Activated naive CD4-positive, alpha-beta T cell treated with anti-CD3 and anti-CD28 coated beads for 36 hours (primary cell): ENCODE measurements at regions of chr11 and their contacts with region 1.

Region 1: DNA sequence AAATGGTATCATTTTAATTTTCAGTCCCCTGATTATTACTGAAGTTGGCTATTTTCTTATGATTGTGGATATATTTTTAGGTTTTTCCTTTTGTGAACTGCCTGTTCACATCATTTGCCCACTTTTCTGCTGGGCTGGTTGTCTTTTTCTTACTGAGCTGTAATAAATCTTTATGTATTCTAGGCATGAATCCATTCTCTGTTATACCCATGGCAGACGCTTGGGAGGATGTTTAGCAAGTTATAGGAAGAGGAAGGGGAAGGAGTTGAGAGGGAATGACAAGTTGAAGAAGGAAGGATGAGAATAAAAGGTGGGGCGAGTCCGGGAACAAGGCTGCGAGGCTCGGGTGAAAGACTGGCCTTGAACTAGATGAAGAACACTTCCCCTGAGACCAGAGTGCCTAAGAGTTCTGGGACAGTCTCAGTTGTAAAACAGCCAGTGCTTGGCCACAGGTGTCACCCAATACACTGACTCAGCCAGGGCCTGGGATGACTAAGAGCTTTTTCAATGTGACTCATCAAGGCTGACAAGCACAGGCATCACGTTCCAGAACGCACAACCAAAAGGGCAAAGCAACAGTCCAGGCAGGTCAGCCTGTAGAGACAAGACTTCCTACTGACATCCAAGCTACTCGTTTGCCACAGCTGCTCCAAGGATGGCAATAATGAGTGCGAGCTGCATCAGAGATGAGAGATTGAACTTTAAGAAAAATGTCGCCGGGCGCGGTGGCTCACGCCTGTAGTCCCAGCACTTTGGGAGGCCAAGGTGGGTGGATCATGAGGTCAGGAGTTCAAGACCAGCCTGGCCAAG is 35.2 kb downstream of the LRFN4 start:
- DNase-seq: peak; percentile 80
- H3K4me3 Mint-ChIP-seq: no peak overlapping the region
- H3K27ac Mint-ChIP-seq: no peak overlapping the region
- H3K4me1 Mint-ChIP-seq: peaks cover 8% of the 10 kb centered on the region
- H3K27me3 Mint-ChIP-seq: no peaks in the 10 kb centered on the region

Region 2: GRCh38 chr11:66625041-66625751 is 266.9 kb before region 1 on chr11:
- CTCF ChIA-PET with region 1: no interaction called
- intact Hi-C with region 1: no loop called
- DNase-seq: no peak
- H3K4me3 Mint-ChIP-seq: no peak overlapping the region
- H3K27ac Mint-ChIP-seq: no peak overlapping the region
- H3K4me1 Mint-ChIP-seq: peaks cover 62% of the 10 kb centered on the region
- H3K27me3 Mint-ChIP-seq: no peaks in the 10 kb centered on the region

Region 3: DNA sequence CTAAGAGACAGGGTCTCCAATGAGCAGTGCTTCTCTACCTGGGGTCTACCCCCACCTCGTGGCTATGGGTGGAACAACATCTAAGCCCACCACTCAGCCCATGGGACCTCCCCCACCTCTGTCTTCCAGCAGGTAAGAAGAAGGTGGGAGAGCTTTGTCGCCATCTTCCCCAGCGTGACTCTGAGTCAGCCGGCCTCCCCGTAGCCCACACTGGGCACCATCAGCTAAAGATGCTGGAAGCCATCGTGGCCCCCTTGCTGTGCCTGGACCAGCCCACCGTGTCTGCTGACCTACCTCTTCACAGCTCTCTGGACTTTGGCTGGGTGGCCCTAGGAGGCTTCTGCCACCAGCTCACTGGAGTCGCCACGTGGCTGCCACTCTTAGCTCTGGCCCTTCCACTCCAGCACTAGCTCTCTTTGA is 84.0 kb after region 1 on chr11:
- CTCF ChIA-PET with region 1: no interaction called
- intact Hi-C with region 1: loop called (anchors 5 kb)
- DNase-seq: peak; percentile 30
- H3K4me3 Mint-ChIP-seq: no peak overlapping the region
- H3K27ac Mint-ChIP-seq: no peak overlapping the region
- H3K4me1 Mint-ChIP-seq: peaks cover under 1% of the 10 kb centered on the region
- H3K27me3 Mint-ChIP-seq: no peaks in the 10 kb centered on the region

Region 4: DNA sequence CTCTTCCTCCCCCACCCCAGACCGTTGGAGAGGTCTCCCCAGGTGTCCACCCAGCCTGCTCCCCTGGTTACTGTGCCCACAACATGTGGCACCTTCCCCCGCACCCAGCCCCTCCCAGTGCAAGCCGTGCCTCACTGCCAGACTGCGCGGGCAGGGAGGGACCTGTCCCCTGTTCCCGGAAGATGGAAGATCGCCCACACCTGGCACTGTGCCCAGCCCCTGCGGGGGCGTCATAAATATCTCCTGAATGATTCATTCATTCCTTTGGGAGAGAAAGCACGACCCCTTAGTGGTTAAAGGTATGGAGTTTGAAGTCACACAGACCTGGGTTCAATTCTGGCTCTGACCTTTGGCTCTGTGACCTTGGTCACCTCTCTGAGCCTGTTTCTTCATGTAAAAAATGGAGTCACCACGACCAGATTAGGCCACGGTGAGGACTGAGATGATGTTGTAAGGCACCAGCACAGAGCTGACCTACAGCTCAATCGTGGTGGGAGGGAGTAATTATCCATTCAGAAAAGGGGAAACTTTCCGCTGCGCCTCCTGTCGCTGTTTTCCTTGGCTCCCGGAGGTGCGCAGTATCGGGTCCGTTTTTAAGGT is 130.4 kb after region 1 on chr11:
- CTCF ChIA-PET with region 1: no interaction called
- intact Hi-C with region 1: loop called (anchors 5 kb)
- DNase-seq: no peak
- H3K4me3 Mint-ChIP-seq: peak overlapping the region; percentile 45
- H3K27ac Mint-ChIP-seq: no peak overlapping the region
- H3K4me1 Mint-ChIP-seq: peaks cover 29% of the 10 kb centered on the region
- H3K27me3 Mint-ChIP-seq: peaks cover 39% of the 10 kb centered on the region